A549 (cell line): ENCODE measurements at regions of chr20 and their contacts with region 1.

Region 1: DNA sequence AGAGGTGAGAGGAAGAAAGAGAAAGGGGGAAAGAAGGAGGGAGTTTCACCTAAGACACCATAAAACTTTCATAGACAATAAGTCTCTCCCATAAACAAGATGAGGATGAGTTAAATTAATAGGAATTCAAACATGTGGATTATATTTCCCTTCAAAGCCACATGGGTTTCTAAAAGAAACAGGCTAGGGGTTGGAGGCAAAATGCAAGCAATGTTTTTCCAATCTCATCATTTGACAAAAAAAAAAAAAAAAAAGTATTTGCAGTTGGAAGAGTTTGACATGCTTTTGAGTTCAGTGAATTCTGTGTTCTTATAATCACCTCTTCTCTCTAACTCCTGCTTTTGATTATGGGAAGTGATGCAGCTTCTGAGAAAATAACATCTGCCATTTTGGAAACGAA is 286.5 kb upstream of the PRND start:
- DNase-seq: no peak
- ATAC-seq: no peak
- H3K4me3 ChIP-seq: no peak overlapping the region
- H3K27ac ChIP-seq: no peak overlapping the region
- H3K4me1 ChIP-seq: no peaks in the 10 kb centered on the region
- CTCF ChIP-seq: no peak
- EP300 ChIP-seq: no peak
- POLR2A ChIP-seq: no peak
- RAD21 ChIP-seq: no peak

Region 2: GRCh38 chr20:4326195-4327065 is 108.8 kb before region 1 on chr20:
- CTCF ChIA-PET with region 1: no interaction called
- POLR2A ChIA-PET with region 1: no interaction called
- DNase-seq: peak in 1 of 2 experiments; percentile 26
- ATAC-seq: no peak
- H3K4me3 ChIP-seq: no peak overlapping the region
- H3K27ac ChIP-seq: no peak overlapping the region
- H3K4me1 ChIP-seq: no peaks in the 10 kb centered on the region
- CTCF ChIP-seq: no peak
- EP300 ChIP-seq: no peak
- POLR2A ChIP-seq: no peak
- RAD21 ChIP-seq: no peak

Region 3: GRCh38 chr20:4375881-4376280 is 59.3 kb before region 1 on chr20:
- CTCF ChIA-PET with region 1: no interaction called
- POLR2A ChIA-PET with region 1: no interaction called
- DNase-seq: no peak
- ATAC-seq: no peak
- H3K4me3 ChIP-seq: no peak overlapping the region
- H3K27ac ChIP-seq: no peak overlapping the region
- H3K4me1 ChIP-seq: no peaks in the 10 kb centered on the region
- CTCF ChIP-seq: no peak
- EP300 ChIP-seq: no peak
- POLR2A ChIP-seq: no peak
- RAD21 ChIP-seq: no peak

Region 4: GRCh38 chr20:4480104-4480503 is 44.9 kb after region 1 on chr20:
- CTCF ChIA-PET with region 1: no interaction called
- POLR2A ChIA-PET with region 1: interaction called, 11 read pairs
- DNase-seq: no peak
- ATAC-seq: peak; percentile 74 to 77; a peak in 4 of 6 replicates
- H3K4me3 ChIP-seq: no peak overlapping the region
- H3K27ac ChIP-seq: no peak overlapping the region
- H3K4me1 ChIP-seq: peaks cover 7% of the 10 kb centered on the region; the same call in 1 of the 3 replicates
- CTCF ChIP-seq: no peak
- EP300 ChIP-seq: no peak
- POLR2A ChIP-seq: no peak
- RAD21 ChIP-seq: no peak